Ascending aorta (tissue), 2 donors: ENCODE measurements at regions of chr7 and their contacts with region 1.

Region 1: GRCh38 chr7:150404805-150405583 is 25.9 kb downstream of the ZNF775 start:
- DNase-seq: peak; percentile 61 to 92
- H3K4me3 ChIP-seq: peak overlapping the region; percentile 78 to 89
- H3K27ac ChIP-seq: peak overlapping the region; percentile 92 to 97
- H3K4me1 ChIP-seq: peaks cover 2 to 15% of the 10 kb centered on the region in 2 donors
- H3K27me3 ChIP-seq: no peaks in the 10 kb centered on the region
- CTCF ChIP-seq: peak in 2 of 3 experiments; percentile 6 to 25

Region 2: DNA sequence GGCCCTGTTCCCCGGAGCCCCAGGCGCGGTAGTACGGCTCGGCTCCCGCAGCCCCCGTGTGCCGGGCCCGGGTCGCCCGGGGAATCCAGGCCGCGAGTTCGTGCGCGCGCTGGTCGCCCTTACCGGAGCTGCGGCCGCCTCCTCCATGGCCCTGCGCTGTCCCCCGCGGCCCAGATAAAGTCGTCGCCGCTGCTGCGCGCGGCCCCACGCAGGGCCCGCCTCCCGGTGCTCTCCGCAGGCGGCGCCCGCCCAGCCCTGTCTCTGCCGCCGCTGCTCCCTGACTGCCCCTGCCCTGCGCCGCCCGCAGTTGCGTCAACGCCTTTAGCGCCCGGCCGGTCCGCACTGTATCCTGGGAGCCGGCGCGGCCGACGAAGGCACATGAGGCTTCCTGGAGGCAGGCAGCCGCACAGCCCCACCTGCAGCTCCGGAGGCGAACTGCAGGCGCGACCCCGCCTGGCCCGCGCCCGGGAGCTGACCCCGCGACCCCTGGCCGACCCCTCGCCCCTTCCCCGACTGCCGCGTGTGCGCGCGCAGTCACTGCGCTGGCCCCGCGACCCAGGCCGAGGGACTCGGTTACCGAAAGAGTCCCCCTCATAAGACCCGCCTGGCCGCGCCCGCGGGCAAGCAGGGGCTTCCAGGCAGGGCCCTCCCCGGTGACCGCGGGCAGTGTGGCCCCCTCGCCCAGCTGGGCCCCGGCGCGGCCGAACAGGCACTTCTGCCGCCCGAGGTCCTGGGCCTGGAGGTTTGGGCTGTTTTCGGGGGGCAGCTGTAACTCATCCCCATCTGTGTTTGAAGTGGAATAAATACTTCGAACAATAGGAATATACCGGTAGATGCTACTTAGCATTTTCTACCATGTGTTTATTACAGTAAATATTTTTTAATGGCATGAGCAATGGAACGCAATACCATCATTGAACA is 780.3 kb before region 1 on chr7:
- intact Hi-C with region 1: loop called (anchors 10 kb)
- DNase-seq: peak; percentile 77 to 97
- H3K4me3 ChIP-seq: peak overlapping the region; percentile 91 to 98
- H3K27ac ChIP-seq: peak overlapping the region; percentile 84 to 90
- H3K4me1 ChIP-seq: peaks cover 0 to 7% of the 10 kb centered on the region in 2 donors
- H3K27me3 ChIP-seq: no peaks in the 10 kb centered on the region
- CTCF ChIP-seq: peak; percentile 92 to 98 (median 93)

Region 3: DNA sequence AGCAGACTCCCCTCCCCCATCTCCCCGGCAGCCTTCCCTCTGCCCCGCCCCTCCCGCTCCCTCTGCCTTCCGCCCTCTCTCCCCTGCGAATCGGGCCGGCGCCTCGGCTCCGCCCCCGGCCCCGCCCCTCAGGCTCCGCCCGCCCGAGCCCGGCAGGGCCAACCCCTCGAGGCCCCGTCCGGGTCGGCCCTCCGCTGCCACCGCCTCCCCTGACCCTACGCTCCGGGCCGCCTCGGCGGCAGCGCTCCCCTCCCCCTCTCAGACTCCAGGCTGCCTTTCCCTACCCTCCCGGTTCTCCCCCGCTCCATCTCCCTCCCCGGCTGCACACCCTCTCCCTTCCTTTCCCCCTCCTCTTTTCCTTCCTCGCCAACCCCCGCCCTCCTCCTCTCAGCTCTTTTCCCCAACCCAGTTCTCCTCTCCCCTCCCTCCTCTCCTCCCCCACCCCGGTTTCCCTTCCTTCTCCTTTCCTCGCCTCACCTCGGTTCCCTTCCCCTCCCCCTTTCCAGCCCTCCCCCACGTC is 633.2 kb before region 1 on chr7:
- intact Hi-C with region 1: loop called (anchors 5 kb)
- DNase-seq: peak; percentile 68 to 93
- H3K4me3 ChIP-seq: peak overlapping the region; percentile 83 to 87
- H3K27ac ChIP-seq: no peak overlapping the region
- H3K4me1 ChIP-seq: peaks cover 5 to 10% of the 10 kb centered on the region in 2 donors
- H3K27me3 ChIP-seq: no peaks in the 10 kb centered on the region
- CTCF ChIP-seq: no peak

Region 4: DNA sequence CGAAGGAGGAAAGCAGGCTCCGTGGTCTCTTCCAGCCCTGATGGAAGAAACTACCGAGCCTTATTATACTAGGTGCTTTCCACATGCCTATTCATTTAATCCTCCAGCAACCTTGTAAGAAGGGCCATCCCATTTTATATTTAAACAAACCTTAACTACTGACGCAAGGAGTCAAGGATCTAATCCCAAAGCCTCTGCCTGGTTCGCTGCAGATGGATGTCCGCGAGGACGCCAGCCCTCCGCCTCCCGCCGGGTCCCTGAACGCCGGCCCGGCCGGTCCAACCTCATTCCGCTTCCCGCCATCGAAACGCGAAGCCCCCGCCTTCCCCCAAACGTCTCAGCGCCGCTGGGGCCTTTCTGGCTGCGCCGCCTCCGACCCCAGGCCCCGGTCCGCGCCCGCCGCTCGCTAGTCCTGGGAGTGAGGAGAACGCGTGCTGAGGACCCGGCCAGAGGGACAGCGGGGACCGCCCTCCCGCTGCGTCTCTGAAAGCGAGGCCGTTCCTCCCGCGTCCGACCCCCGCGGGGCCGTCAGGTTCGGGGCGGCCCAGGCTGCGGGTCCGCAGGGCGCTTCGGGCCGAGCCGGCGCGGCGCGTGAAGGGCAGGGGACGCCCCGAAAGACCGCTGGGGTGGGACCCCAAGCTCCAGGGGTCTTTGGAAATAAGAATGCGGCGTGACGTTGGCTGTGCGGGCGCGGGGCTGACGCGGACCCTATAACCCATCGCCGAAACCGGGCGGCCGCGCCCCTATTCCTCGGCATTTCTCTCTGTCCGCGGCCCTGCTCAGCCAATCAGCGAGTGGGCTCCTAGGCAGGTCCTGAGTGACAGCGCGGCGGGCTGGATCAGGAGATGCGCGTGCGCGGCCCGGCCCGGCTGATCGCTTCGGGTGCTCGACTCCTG is 531.7 kb before region 1 on chr7 and contains the start of gene ATP6V0E2:
- intact Hi-C with region 1: loop called (anchors 10 kb)
- DNase-seq: peak; percentile 81 to 97
- H3K4me3 ChIP-seq: peak within 1 kb of the TSS; percentile 86 to 89
- H3K27ac ChIP-seq: peak within 1 kb of the TSS; percentile 84 to 86
- H3K4me1 ChIP-seq: peaks cover 11% of the 10 kb centered on the region in 2 donors
- H3K27me3 ChIP-seq: no peaks in the 10 kb centered on the region
- CTCF ChIP-seq: no peak
- total RNA-seq, gene ATP6V0E2: 29.5 TPM

Region 5: GRCh38 chr7:150340024-150340749 is 64.8 kb before region 1 on chr7:
- intact Hi-C with region 1: loop called (anchors 5 kb)
- DNase-seq: peak in 1 of 2 donors; percentile 63
- H3K4me3 ChIP-seq: peak overlapping the region; percentile 51 to 68
- H3K27ac ChIP-seq: peak overlapping the region; percentile 54 to 63
- H3K4me1 ChIP-seq: peaks cover 7% of the 10 kb centered on the region in 2 donors
- H3K27me3 ChIP-seq: no peaks in the 10 kb centered on the region
- CTCF ChIP-seq: no peak

Region 6: DNA sequence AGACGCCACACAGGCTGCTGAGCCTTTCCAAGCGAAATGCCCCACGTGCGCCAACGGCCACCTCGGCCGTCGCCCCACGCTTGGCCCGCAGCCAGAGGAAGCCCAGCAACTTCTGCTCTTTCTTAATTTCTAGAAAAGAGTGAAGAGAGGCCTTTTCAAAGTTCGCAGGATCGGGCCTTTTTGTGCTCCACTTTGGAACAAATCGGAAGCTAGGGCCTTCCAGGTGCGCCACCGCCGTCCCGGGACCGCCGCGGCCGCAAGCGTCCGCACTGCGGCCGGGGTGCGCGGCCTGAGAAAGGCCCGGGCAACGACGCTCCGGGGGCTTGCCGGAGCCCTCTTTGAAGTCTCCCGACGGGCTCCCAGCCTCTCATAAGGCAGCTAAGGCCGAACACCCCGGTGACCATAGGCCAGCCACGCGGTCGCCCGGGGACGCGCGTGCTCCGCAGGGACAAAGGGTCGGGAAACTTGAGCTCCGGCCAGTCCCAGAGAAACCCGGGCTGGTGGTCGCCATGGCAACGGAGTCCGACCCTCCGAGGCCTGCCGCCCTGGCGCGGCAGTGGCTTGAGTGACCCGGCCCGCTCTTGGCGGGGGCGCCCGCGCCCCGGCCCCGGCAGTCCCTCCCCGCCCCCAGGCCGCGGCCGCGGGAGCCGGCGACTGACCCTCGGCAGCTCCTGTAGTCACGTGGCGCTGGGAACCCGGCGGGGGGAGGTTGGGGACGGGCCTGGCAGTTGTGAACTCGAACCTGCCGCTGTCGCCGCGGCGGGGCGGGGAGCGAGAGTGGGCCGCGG is 36.7 kb before region 1 on chr7 and contains the start of gene REPIN1:
- intact Hi-C with region 1: loop called (anchors 2 kb)
- DNase-seq: peak; percentile 75 to 96
- H3K4me3 ChIP-seq: peak within 1 kb of the TSS; percentile 96 to 97
- H3K27ac ChIP-seq: peak within 1 kb of the TSS; percentile 90
- H3K4me1 ChIP-seq: peaks cover 8 to 11% of the 10 kb centered on the region in 2 donors
- H3K27me3 ChIP-seq: no peaks in the 10 kb centered on the region
- CTCF ChIP-seq: no peak
- total RNA-seq, gene REPIN1: 123 TPM

Region 7: DNA sequence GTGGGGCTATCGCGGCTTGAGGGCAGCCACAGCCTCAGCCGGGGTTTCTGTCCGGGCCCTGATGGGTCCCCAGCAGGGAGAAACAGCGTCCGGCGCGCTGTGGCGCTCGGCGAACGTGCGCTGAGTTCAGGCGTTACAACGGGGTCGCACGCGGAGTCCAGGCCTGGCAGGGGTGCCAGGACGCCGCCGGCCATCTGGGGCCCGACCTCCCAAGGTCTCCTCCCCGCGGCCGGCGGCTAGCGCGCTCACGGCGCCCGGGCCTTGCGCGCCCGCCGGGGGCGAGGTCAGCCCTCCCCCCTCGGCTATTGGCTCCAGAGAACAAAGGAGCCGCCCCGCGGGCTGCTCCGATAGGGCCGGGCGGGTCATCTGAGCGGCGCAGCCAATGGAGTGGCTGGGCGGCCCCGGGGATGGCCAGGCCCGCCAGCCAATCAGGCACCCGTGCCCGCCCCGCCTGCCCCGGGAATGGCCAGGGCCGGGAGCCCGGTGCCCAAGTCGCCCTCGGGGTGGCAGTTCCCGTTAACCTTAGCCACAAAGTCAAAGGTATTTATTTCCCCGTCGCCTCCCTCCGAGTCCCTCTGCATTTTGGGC is 26.0 kb before region 1 on chr7 and contains the start of gene ZNF775:
- intact Hi-C with region 1: loop called (anchors 1 kb)
- DNase-seq: peak; percentile 88 to 98
- H3K4me3 ChIP-seq: peak within 1 kb of the TSS; percentile 61 to 93
- H3K27ac ChIP-seq: peak within 1 kb of the TSS; percentile 79 to 85
- H3K4me1 ChIP-seq: peaks cover 0 to 6% of the 10 kb centered on the region in 2 donors
- H3K27me3 ChIP-seq: no peaks in the 10 kb centered on the region
- CTCF ChIP-seq: no peak
- total RNA-seq, gene ZNF775: 17.1 TPM